Naive thymus-derived CD8-positive, alpha-beta T cell (primary cell): ENCODE measurements at regions of chr17 and their contacts with region 1.

Region 1: DNA sequence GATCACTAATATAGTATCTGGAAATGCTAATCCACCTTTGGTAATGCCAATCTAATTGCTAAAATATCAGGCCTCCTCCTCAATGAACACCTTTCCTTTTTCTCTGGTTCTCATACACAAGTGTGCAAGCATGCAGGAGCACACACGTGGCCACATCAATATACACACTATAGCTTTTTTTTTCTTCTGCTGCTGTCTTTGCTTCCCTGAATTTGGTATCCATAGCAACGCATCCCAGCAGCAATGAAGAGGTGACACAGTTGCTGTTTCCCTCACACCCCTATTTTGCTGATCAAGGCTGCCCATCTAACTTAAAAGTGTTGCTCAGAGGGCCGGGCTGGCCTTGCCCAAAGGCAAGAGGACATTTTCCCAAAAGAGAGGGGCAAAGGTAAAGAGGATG is 15.5 kb downstream of the NOG start:
- DNase-seq: no peak
- ATAC-seq: no peak
- H3K4me3 Mint-ChIP-seq: no peak overlapping the region
- H3K27ac Mint-ChIP-seq: peak overlapping the region in 4 of 10 donors; percentile 6 to 58 (median 34)
- H3K4me1 Mint-ChIP-seq: peaks cover 19 to 46% (median 36%) of the 10 kb centered on the region in 4 donors
- H3K27me3 Mint-ChIP-seq: peaks cover 0 to 3% (median 0%) of the 10 kb centered on the region in 5 donors

Region 2: DNA sequence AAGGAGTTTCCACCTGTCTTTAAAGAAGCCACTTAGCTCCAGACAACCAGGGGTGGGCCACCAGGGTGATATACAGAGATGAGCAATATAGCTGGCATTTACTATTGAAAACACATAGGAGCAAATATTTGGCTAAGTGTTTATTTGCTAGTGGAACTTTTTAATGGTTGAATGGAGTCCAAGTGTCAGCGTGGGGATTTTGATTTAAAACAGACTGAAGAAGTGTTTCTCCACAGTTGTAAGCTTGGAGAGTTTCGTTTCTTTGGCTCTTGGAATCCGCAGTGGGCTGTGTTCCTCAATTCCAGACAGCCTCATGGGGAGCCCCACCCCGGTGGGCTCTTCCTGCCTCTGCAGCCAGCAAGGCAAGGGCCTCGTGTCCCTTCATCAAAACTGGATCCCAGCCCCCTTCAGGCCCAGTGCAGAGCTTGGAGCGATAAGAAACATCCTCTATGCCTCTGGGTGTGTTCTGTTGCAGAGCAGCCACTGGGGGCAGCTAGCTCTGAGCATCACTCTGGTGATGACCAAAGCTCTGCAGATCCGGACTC is 20.7 kb after region 1 on chr17:
- POLR2A ChIA-PET with region 1: interaction called, 266 read pairs
- DNase-seq: peak in 7 of 10 donors; percentile 10 to 72 (median 24)
- ATAC-seq: peak; percentile 89 to 100
- H3K4me3 Mint-ChIP-seq: no peak overlapping the region
- H3K27ac Mint-ChIP-seq: peak overlapping the region in 6 of 10 donors; percentile 4 to 85 (median 27)
- H3K4me1 Mint-ChIP-seq: peaks cover 5 to 16% (median 11%) of the 10 kb centered on the region in 4 donors
- H3K27me3 Mint-ChIP-seq: peaks cover 0 to 2% (median 0%) of the 10 kb centered on the region in 5 donors